Endothelial cell of umbilical vein (primary cell): ENCODE measurements at regions of chr9 and their contacts with region 1.

Region 1: DNA sequence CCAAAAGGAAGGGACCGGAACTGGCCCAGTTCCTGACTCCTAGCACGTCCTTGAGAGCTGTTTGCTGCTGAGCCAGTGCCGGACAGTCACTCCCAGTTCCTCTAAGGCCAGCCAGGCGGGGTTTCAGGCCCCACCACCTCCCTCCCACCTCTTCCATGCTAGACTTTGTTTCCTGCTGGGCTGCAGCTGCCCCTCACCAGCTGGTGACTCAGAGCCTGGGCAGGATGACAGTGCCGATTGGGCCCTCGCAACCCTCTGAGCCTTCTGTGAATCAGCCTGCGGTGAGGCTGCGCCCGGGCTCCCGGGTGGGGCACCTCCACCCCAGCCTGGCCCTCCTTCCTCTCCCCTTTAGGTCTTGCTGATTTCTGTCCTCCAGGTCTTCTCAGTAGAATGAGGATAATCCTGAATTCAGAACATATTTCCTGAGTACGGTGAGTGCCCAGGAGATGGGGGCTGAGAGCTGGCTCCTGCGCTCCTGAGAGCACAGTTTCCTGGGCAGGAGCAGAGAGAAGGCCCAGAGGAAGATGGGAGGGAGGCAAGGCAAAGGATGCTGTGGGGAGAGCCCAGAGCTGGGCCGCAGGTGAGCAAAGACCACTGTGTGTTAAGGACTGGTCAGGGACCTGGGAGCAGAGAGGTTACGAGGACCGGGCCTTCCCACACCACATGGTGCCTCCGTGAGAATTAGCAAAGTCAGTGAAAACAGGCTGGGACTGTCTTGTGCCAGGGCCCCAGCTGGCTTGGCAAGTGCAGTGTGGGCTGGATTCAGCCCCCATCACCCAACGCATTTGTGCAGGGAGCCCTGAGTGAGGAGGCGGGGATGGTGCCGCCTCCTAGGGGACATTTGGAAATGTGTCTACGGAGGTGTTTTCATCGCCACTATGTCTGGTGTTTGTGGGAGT is 32.9 kb upstream of the STXBP1 start:
- DNase-seq: peak; percentile 98
- H3K4me3 ChIP-seq: peak overlapping the region in 2 of 3 experiments; percentile 31 to 49
- H3K27ac ChIP-seq: peak overlapping the region; percentile 95
- H3K4me1 ChIP-seq: peaks cover 19% of the 10 kb centered on the region
- H3K27me3 ChIP-seq: no peaks in the 10 kb centered on the region
- CTCF ChIP-seq: peak; percentile 21 to 51
- POLR2A ChIP-seq: peak; percentile 90

Region 2: GRCh38 chr9:127450830-127451724 is 128.1 kb before region 1 on chr9 and contains the starts of genes LRSAM1 and RPL12:
- CTCF ChIA-PET with region 1: no interaction called
- POLR2A ChIA-PET with region 1: interaction called, 3 read pairs
- dilution Hi-C with region 1: no loop called
- intact Hi-C with region 1: loop called (anchors 2 kb)
- DNase-seq: peak; percentile 93
- H3K4me3 ChIP-seq: peak within 1 kb of the TSS; percentile 54 to 85 (median 60)
- H3K27ac ChIP-seq: peak within 1 kb of the TSS; percentile 65
- H3K4me1 ChIP-seq: peaks cover 19% of the 10 kb centered on the region
- H3K27me3 ChIP-seq: no peaks in the 10 kb centered on the region
- CTCF ChIP-seq: no peak
- POLR2A ChIP-seq: peak; percentile 99
- total RNA-seq, gene LRSAM1: 18.5 and 18.9 TPM in 2 replicates
- total RNA-seq, gene RPL12: 1,231 and 1,361 TPM in 2 replicates

Region 3: DNA sequence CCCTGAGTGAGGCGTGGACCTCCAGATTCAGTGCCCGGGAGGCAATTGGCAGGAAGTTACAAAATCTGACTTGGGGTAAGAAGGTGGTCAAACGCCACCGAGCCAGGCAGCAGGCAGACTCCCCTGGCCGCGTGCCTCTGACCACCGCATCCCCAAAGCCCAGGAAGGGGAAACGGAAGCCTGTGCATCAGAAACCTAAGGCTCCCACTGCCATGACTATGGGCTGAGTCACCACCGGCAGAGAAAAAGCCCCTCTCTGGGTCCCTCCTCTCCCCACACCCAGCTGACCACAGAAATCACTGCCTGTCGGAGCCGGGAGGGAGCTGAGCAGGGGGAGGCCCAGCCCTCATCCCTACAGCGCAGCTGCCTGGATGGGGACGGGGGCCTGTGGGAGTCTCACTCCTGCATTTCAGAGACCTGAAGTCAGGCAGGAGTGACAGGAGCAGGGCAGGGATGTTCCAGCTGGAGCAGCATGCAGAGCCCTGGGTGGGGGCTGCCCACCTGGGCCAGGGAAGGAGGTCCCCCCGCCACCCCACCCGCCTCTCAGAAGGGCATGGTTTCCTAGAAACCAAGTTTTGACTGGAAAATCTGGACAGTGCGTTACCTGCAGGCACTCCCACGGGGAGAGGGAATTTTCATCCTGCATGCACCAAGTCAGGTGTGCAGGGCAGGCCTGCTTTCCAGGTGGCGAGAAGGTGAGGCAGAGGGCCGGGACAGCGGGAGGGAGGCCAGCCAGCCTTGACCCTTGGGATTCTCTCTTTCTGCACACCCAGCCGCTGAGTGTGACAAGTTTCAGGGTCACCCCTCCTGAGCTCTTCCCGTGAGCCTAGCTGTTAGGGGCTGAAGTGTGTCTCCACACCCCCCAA is 59.7 kb before region 1 on chr9:
- CTCF ChIA-PET with region 1: interaction called, 53 read pairs
- POLR2A ChIA-PET with region 1: interaction called, 3 read pairs
- dilution Hi-C with region 1: no loop called
- intact Hi-C with region 1: loop called (anchors 1 kb)
- DNase-seq: peak; percentile 95
- H3K4me3 ChIP-seq: no peak overlapping the region
- H3K27ac ChIP-seq: peak overlapping the region; percentile 99
- H3K4me1 ChIP-seq: peaks cover 46% of the 10 kb centered on the region
- H3K27me3 ChIP-seq: no peaks in the 10 kb centered on the region
- CTCF ChIP-seq: no peak
- POLR2A ChIP-seq: no peak

Region 4: DNA sequence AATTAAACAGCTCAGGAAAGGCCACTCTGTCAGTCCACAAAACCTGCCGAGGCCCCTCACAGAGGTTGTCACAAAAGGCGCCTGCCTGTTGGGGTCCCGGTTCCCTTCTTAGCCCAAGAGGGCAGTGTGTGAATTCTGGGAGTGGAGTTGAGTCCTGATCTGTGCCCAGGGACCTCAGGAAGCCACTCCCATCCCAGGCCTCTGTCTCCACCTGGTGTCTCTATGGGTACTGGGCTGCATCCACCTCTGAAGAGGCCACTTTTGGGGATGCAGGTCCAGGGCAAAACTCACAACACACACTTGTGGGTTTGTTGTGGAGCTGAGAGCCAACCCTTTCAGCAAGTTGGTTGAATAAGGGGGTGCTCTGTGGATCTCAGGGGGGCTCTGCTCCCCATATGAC is 41.4 kb before region 1 on chr9:
- CTCF ChIA-PET with region 1: interaction called, 16 read pairs
- POLR2A ChIA-PET with region 1: no interaction called
- dilution Hi-C with region 1: no loop called
- intact Hi-C with region 1: no loop called
- DNase-seq: no peak
- H3K4me3 ChIP-seq: no peak overlapping the region
- H3K27ac ChIP-seq: no peak overlapping the region
- H3K4me1 ChIP-seq: peaks cover 31% of the 10 kb centered on the region
- H3K27me3 ChIP-seq: no peaks in the 10 kb centered on the region
- CTCF ChIP-seq: peak in 1 of 2 donors; percentile 24
- POLR2A ChIP-seq: no peak

Region 5: GRCh38 chr9:127561619-127562500 is 17.3 kb before region 1 on chr9:
- CTCF ChIA-PET with region 1: interaction called, 14 read pairs
- POLR2A ChIA-PET with region 1: interaction called, 8 read pairs
- dilution Hi-C with region 1: no loop called
- intact Hi-C with region 1: loop called (anchors 1 kb)
- DNase-seq: peak; percentile 91
- H3K4me3 ChIP-seq: no peak overlapping the region
- H3K27ac ChIP-seq: peak overlapping the region; percentile 85
- H3K4me1 ChIP-seq: peaks cover 71% of the 10 kb centered on the region
- H3K27me3 ChIP-seq: no peaks in the 10 kb centered on the region
- CTCF ChIP-seq: no peak
- POLR2A ChIP-seq: no peak